ENCODE measurements at regions of chr15 and their contacts with region 1.

Region 1: DNA sequence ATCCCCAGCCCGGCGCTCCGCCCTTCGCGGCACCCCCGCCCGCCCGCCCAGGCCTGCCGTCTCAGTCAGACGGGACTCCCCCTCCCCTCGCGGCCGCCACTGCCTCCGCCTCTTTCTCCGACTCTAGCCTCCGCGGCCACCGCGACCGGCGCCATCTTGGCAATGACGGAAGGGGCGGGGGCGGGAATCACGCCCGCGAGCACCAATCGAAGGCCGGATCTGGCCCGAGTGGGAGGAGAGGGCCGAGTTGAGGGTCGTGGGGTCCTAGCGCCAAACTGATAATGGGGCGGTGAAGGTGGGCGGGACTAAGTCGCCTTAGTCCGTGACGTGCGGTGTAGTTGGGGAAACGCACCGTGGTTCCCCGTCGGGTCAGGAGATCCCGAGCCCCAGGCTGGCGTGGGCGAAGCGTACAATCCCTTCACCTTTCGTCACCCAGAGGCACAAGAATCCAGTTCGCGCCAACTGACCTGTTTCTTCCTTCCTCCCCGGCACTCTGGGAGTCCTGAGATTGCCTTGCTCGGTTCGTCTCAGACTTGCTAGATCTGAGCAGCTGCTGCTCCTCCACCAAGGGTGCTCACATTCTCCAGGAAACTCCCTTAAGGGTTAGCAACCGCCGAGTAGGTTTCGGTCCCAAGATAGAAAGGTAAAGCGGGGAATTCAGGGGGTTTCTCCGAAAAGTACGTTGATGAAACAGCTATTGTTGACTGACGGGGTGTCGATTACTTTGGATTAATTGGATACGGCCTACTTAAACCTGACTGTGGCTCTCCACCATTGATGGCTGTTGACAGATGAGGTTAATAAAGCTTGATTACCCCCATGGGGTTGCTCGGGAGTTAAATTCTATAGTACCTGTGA is at the start of gene DENND4A:
- DNase-seq: peak; percentile 99
- H3K4me3 ChIP-seq: peak within 1 kb of the TSS; percentile 87 to 94
- H3K4me3 Mint-ChIP-seq: peak within 1 kb of the TSS; percentile 93 to 99 (median 96)
- H3K27ac ChIP-seq: peak within 1 kb of the TSS; percentile 97
- H3K27ac Mint-ChIP-seq: peak within 1 kb of the TSS; percentile 98 to 100 (median 99)
- H3K4me1 ChIP-seq: peaks cover 46% of the 10 kb centered on the region
- H3K4me1 Mint-ChIP-seq: peaks cover 29 to 60% (median 48%) of the 10 kb centered on the region in 4 donors
- H3K27me3 ChIP-seq: no peaks in the 10 kb centered on the region
- H3K27me3 Mint-ChIP-seq: no peaks in the 10 kb centered on the region
- total RNA-seq, gene DENND4A: 63.1 to 69.4 TPM

Region 2: DNA sequence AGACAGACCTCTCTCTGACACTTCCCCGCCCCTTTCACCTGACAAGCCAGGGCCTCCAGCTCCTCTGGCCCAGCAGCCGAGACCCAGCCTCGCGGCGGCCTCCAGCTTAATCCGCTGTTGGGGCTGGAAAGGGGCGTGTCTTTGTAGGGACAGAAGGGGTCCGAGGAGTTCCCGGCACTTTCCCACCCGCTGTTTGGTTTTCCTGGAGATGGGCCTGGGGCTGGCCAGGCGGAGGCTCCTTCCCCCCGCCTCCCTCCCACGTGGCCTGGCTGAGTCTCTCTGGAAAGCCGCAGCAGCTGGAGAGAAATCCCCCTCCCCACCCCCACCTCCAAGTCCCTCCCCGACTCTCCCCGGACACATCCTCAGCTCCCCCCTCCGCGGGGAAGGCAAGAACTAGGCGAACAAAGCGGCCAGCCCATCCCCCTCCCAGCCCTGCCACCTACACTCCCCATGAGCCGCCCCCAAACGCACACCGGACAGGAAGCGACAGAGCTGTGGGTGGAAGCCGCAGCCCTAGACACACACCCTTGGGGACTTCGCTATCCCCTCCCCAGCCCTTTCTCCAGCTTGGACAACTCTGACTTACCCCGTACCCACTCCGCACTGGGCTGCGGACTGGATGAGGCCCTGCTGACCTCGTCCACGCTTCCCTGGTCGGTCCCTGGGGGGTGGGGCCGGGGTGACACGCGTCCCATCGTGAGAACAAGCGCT is 370.8 kb before region 1 on chr15:
- CTCF ChIA-PET with region 1: no interaction called
- POLR2A ChIA-PET with region 1: no interaction called
- intact Hi-C with region 1: no loop called
- DNase-seq: no peak
- H3K4me3 ChIP-seq: no peak overlapping the region
- H3K4me3 Mint-ChIP-seq: peak overlapping the region in 6 of 8 donors; percentile 73 to 87 (median 82)
- H3K27ac ChIP-seq: no peak overlapping the region
- H3K27ac Mint-ChIP-seq: no peak overlapping the region
- H3K4me1 ChIP-seq: peaks cover 9% of the 10 kb centered on the region
- H3K4me1 Mint-ChIP-seq: peaks cover 11 to 25% (median 16%) of the 10 kb centered on the region in 4 donors
- H3K27me3 ChIP-seq: peaks cover 12% of the 10 kb centered on the region
- H3K27me3 Mint-ChIP-seq: peaks cover 46 to 58% of the 10 kb centered on the region in 2 donors

Region 3: GRCh38 chr15:65757256-65757655 is 35.1 kb before region 1 on chr15:
- CTCF ChIA-PET with region 1: no interaction called
- POLR2A ChIA-PET with region 1: interaction called, 5 read pairs
- intact Hi-C with region 1: loop called (anchors 5 kb)
- DNase-seq: no peak
- H3K4me3 ChIP-seq: no peak overlapping the region
- H3K4me3 Mint-ChIP-seq: no peak overlapping the region
- H3K27ac ChIP-seq: no peak overlapping the region
- H3K27ac Mint-ChIP-seq: peak overlapping the region in 2 of 7 donors; percentile 29 to 36
- H3K4me1 ChIP-seq: peaks cover 16% of the 10 kb centered on the region
- H3K4me1 Mint-ChIP-seq: peaks cover 14 to 23% (median 19%) of the 10 kb centered on the region in 4 donors
- H3K27me3 ChIP-seq: no peaks in the 10 kb centered on the region
- H3K27me3 Mint-ChIP-seq: no peaks in the 10 kb centered on the region

Region 4: GRCh38 chr15:65777053-65777452 is 15.3 kb before region 1 on chr15:
- CTCF ChIA-PET with region 1: interaction called, 10 read pairs
- POLR2A ChIA-PET with region 1: interaction called, 41 read pairs
- intact Hi-C with region 1: no loop called
- DNase-seq: no peak
- H3K4me3 ChIP-seq: no peak overlapping the region
- H3K4me3 Mint-ChIP-seq: no peak overlapping the region
- H3K27ac ChIP-seq: no peak overlapping the region
- H3K27ac Mint-ChIP-seq: peak overlapping the region in 1 of 7 donors; percentile 66
- H3K4me1 ChIP-seq: peaks cover 41% of the 10 kb centered on the region
- H3K4me1 Mint-ChIP-seq: peaks cover 26 to 47% (median 39%) of the 10 kb centered on the region in 4 donors
- H3K27me3 ChIP-seq: no peaks in the 10 kb centered on the region
- H3K27me3 Mint-ChIP-seq: no peaks in the 10 kb centered on the region

Region 5: DNA sequence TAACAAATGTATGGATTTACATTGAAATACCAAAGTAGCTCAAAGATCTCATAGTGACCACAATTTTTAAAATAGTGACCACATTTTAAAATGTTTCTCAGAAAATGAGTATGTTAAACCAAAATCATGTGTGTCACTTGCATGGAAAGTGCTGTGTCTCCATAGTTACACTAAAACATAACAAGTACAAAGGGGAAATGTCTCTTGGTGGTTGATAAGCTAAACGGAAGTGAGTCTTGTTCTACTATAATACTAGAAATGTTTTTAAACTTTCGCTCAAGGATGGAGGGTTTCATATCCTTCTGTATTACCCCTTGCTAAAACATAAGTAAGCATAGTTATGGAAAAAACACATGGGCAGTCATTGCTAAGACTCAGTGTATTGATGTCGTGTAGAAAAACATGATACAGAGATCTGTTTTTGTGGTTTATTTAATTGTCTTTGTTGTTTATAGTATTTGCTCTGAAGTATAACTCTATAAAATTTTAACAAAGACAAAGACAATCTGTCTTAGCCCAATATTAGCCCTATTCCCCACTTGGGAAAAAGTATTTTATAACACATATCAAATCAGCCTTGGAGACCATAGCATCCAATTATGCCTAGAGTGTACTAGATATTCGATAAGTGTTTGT is 26.7 kb after region 1 on chr15:
- CTCF ChIA-PET with region 1: interaction called, 13 read pairs
- POLR2A ChIA-PET with region 1: interaction called, 144 read pairs
- intact Hi-C with region 1: loop called (anchors 1 kb)
- DNase-seq: peak; percentile 69 to 93 (median 89)
- H3K4me3 ChIP-seq: peak overlapping the region in 1 of 2 donors; percentile 17
- H3K4me3 Mint-ChIP-seq: peak overlapping the region; percentile 32 to 77 (median 74)
- H3K27ac ChIP-seq: peak overlapping the region; percentile 85
- H3K27ac Mint-ChIP-seq: peak overlapping the region; percentile 90 to 99 (median 96)
- H3K4me1 ChIP-seq: peaks cover 62% of the 10 kb centered on the region
- H3K4me1 Mint-ChIP-seq: peaks cover 35 to 63% (median 50%) of the 10 kb centered on the region in 4 donors
- H3K27me3 ChIP-seq: no peaks in the 10 kb centered on the region
- H3K27me3 Mint-ChIP-seq: no peaks in the 10 kb centered on the region

Region 6: DNA sequence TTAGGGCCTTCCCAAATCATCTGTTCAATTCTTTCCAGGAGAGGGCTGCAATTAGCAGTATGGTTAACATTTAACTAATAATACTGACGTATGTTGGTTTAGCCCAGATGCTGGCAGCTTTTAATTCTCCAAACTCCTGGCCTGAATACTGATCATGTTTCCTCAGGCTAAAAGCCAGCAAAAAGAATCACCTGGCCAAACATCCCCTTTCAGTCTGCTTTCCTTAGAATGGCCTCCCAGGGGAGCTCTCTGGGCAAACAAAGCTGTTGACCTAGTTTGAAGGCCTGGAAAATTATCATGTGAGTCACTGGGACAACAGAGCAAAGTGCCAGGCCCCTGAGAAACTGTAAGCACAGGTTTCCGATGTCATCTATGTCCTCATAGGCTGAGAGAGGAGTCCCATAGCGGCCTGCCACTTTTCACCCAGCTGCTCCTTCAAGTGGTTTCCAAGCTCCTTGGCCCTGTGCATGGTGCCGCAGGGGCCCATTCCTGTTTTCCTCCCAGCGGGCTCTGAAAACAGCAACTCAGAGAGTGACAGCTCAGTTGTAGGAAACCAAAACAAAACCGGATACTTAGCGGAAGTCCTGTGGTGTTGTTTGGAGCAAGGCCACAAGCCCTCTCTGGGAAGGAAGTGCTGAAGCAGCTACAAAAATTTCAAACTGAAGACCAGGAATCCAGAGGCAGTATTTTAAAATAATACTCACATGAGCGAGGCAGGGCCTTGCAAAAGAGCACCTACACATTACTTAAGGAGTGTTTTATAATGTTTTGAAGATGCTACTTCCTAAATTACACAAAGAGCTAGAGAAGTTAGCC is 40.4 kb after region 1 on chr15:
- CTCF ChIA-PET with region 1: interaction called, 35 read pairs
- POLR2A ChIA-PET with region 1: interaction called, 77 read pairs
- intact Hi-C with region 1: loop called (anchors 1 kb)
- DNase-seq: peak; percentile 65 to 73 (median 69)
- H3K4me3 ChIP-seq: peak overlapping the region in 1 of 2 donors; percentile 7
- H3K4me3 Mint-ChIP-seq: peak overlapping the region; percentile 77 to 91 (median 81)
- H3K27ac ChIP-seq: peak overlapping the region; percentile 71
- H3K27ac Mint-ChIP-seq: peak overlapping the region; percentile 93 to 97 (median 96)
- H3K4me1 ChIP-seq: peaks cover 68% of the 10 kb centered on the region
- H3K4me1 Mint-ChIP-seq: peaks cover 47 to 72% (median 59%) of the 10 kb centered on the region in 4 donors
- H3K27me3 ChIP-seq: no peaks in the 10 kb centered on the region
- H3K27me3 Mint-ChIP-seq: no peaks in the 10 kb centered on the region

Measured in CD4-positive, alpha-beta memory T cell (primary cell).